ENCODE measurements at regions of chr1 and their contacts with region 1.

Region 1: DNA sequence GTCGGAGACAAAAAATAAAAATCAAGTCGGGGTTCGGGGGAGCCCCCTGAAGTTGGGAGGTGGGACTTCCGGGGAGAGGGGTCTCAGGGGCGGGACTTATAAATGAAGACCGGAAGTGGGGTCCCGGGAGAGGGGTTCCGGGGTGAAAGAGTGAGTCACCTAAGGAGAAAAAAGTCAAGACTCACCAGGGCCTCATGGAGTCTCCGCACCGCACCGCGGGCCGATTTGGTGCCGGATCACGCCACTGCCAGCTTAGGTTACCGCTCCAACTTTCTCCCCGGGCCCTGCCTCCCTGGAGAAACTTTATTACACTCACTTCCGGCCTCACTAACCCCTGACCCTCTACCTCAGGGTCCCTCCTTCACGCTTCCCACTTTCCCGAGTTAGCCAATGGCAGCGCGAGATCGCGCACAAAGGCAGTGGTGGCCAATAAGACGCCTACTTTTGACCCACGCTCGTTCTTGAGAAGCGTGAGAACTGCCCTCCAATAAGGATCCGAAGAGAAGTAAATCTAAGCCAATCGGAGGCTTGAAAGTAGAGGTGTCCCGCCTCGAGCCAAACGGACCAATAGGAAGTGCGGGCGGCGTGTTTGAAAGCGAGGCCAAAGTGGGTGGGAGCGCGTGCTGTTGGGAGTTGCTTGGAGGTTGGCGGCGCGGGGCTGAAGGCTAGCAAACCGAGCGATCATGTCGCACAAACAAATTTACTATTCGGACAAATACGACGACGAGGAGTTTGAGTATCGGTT is at the start of gene CKS1B:
- DNase-seq: peak; percentile 100
- H3K4me3 ChIP-seq: peak within 1 kb of the TSS; percentile 64 to 88 (median 87)
- H3K27ac ChIP-seq: peak within 1 kb of the TSS; percentile 99
- H3K4me1 ChIP-seq: peaks cover 36% of the 10 kb centered on the region
- H3K27me3 ChIP-seq: no peaks in the 10 kb centered on the region
- CTCF ChIP-seq: no peak
- POLR2A ChIP-seq: peak; percentile 60
- total RNA-seq, gene CKS1B: 126 and 128 TPM in 2 replicates

Region 2: DNA sequence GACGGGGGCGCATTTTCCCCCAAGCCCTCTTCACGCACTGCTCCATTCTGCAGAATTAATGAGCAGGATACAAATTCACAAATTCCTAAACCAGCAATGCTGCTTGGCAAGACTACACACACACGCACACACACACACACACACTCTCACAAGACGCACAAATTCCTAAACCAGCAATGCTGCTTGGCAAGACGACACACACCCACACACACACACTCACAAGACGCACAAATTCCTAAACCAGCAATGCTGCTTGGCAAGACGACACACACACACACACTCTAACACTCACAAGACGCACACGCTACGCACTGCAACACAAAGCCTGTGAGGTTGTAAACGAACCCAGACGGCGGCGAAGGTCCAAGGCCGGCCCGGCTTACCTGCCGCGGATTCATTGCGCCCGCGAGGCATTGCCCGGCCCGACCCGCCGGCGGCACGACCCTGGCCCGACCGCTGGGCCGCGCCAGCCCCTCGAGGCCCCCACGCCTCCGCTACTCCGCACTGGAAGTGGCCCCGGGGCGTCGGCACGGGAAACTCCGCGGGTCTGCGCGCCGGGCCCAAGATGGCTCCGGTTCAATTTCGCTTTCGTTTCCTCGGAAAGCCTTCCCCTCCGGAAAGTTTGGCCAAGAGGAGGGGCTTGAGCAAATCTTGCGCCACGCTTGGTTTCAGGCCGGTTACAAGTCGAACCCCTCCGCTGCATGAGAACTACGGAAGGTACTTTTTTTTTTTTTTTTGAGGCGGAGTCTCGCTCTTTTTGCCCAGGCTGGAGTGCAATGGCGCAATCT is 366.4 kb before region 1 on chr1 and contains the start of gene ADAR:
- CTCF ChIA-PET with region 1: no interaction called
- POLR2A ChIA-PET with region 1: interaction called, 11 read pairs
- dilution Hi-C with region 1: no loop called
- intact Hi-C with region 1: no loop called
- DNase-seq: peak; percentile 94
- H3K4me3 ChIP-seq: peak within 1 kb of the TSS; percentile 15 to 68 (median 47)
- H3K27ac ChIP-seq: peak within 1 kb of the TSS; percentile 56
- H3K4me1 ChIP-seq: peaks cover 6% of the 10 kb centered on the region
- H3K27me3 ChIP-seq: no peaks in the 10 kb centered on the region
- CTCF ChIP-seq: no peak
- POLR2A ChIP-seq: no peak
- total RNA-seq, gene ADAR: 128 and 141 TPM in 2 replicates

Region 3: DNA sequence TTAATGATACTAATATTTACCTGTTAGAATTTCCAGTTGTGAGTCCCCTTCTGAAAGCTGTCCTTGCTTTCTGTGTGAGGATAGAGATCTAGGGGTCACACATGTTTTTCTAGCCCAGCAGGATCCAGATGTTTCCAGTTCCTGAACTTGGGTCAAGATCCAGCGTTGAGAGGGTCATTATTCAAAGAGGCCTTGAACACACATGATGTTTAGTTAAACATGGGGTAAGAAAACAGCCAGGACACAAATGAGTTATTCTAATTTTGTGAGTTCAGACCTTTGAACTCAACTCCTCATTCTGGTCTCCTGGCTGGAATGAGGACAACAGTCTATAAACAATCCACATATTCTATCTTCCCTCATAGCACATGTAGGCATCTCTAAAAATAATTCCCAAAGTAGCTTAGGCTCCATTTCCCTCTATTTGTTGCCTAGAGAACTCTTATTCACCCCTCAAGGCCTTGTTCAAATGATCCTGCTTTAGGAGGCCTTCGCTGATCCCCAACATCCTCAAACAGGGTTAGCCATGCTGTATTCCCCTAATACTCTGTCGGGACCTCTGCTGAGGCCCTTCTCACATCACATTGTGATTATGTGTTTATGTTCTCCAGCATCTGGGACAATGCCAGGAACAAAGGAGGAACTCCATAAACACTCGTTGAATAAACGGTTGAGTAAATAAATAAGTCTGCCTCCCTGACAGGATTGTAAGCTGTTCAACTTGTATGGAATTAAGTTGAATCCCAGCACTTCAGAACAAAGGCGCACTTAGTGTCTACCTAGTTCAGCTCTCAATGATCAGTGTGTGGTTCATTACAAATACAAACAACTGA is 89.2 kb before region 1 on chr1:
- CTCF ChIA-PET with region 1: no interaction called
- POLR2A ChIA-PET with region 1: no interaction called
- dilution Hi-C with region 1: no loop called
- intact Hi-C with region 1: no loop called
- DNase-seq: peak; percentile 92
- H3K4me3 ChIP-seq: no peak overlapping the region
- H3K27ac ChIP-seq: peak overlapping the region; percentile 32
- H3K4me1 ChIP-seq: peaks cover 18% of the 10 kb centered on the region
- H3K27me3 ChIP-seq: peaks cover 0 to 6% of the 10 kb centered on the region in 2 experiments
- CTCF ChIP-seq: no peak
- POLR2A ChIP-seq: peak; percentile 54

Region 4: GRCh38 chr1:154943649-154944400 is 30.4 kb before region 1 on chr1:
- CTCF ChIA-PET with region 1: interaction called, 11 read pairs
- POLR2A ChIA-PET with region 1: interaction called, 3 read pairs
- dilution Hi-C with region 1: no loop called
- intact Hi-C with region 1: no loop called
- DNase-seq: peak; percentile 29
- H3K4me3 ChIP-seq: no peak overlapping the region
- H3K27ac ChIP-seq: no peak overlapping the region
- H3K4me1 ChIP-seq: no peaks in the 10 kb centered on the region
- H3K27me3 ChIP-seq: no peaks in the 10 kb centered on the region
- CTCF ChIP-seq: peak; percentile 69 to 85
- POLR2A ChIP-seq: no peak

Region 5: GRCh38 chr1:154961497-154962262 is 12.6 kb before region 1 on chr1 and contains the start of gene PYGO2:
- CTCF ChIA-PET with region 1: interaction called, 30 read pairs
- POLR2A ChIA-PET with region 1: interaction called, 24 read pairs
- dilution Hi-C with region 1: no loop called
- intact Hi-C with region 1: loop called (anchors 1 kb)
- DNase-seq: peak; percentile 81
- H3K4me3 ChIP-seq: peak within 1 kb of the TSS; percentile 71 to 78 (median 74)
- H3K27ac ChIP-seq: peak within 1 kb of the TSS; percentile 82
- H3K4me1 ChIP-seq: peaks cover 28% of the 10 kb centered on the region
- H3K27me3 ChIP-seq: no peaks in the 10 kb centered on the region
- CTCF ChIP-seq: peak; percentile 35 to 65
- POLR2A ChIP-seq: peak; percentile 84
- total RNA-seq, gene PYGO2: 21.5 and 21.9 TPM in 2 replicates

Region 6: GRCh38 chr1:155001675-155002463 is 27.6 kb after region 1 on chr1:
- CTCF ChIA-PET with region 1: interaction called, 81 read pairs
- POLR2A ChIA-PET with region 1: interaction called, 3 read pairs
- dilution Hi-C with region 1: no loop called
- intact Hi-C with region 1: loop called (anchors 1 kb)
- DNase-seq: peak; percentile 99
- H3K4me3 ChIP-seq: peak overlapping the region; percentile 57 to 94 (median 61)
- H3K27ac ChIP-seq: peak overlapping the region; percentile 26
- H3K4me1 ChIP-seq: peaks cover 25% of the 10 kb centered on the region
- H3K27me3 ChIP-seq: no peaks in the 10 kb centered on the region
- CTCF ChIP-seq: peak; percentile 12 to 63
- POLR2A ChIP-seq: no peak

Region 7: GRCh38 chr1:155127105-155127964 is 153.1 kb after region 1 on chr1 and contains the start of gene EFNA1:
- CTCF ChIA-PET with region 1: no interaction called
- POLR2A ChIA-PET with region 1: interaction called, 6 read pairs
- dilution Hi-C with region 1: no loop called
- intact Hi-C with region 1: loop called (anchors 5 kb)
- DNase-seq: peak; percentile 93
- H3K4me3 ChIP-seq: peak within 1 kb of the TSS; percentile 51 to 95 (median 91)
- H3K27ac ChIP-seq: peak within 1 kb of the TSS; percentile 68
- H3K4me1 ChIP-seq: peaks cover 59% of the 10 kb centered on the region
- H3K27me3 ChIP-seq: no peaks in the 10 kb centered on the region
- CTCF ChIP-seq: no peak
- POLR2A ChIP-seq: peak; percentile 95
- total RNA-seq, gene EFNA1: 107 and 111 TPM in 2 replicates

Measured in endothelial cell of umbilical vein (primary cell).